T-cell (primary cell): ENCODE measurements at regions of chr13 and their contacts with region 1.

Region 1: DNA sequence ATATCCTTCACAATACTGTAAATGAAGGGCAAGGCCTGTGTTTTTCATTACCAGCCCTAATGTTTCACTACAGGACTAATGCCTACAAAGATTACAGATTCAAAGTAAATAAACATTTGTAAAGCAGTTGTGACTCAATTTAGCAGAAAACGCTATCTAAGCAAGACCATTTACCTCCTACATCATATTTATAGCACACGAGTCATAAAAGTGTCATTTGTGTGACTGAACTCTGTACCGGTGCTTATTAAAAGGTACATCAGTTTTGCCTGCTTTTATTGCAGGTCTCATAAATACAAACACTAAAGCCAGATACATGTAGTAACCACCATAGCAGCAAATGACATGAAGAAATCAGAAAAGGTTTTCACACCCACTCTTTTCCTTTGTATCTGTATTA is 61.5 kb upstream of the SLC15A1 start:
- DNase-seq: no peak
- ATAC-seq: no peak
- H3K4me3 ChIP-seq: no peak overlapping the region
- H3K4me3 Mint-ChIP-seq: no peak overlapping the region
- H3K27ac ChIP-seq: no peak overlapping the region
- H3K27ac Mint-ChIP-seq: no peak overlapping the region
- H3K4me1 ChIP-seq: no peaks in the 10 kb centered on the region
- H3K4me1 Mint-ChIP-seq: no peaks in the 10 kb centered on the region
- H3K27me3 ChIP-seq: no peaks in the 10 kb centered on the region
- H3K27me3 Mint-ChIP-seq: no peaks in the 10 kb centered on the region

Region 2: DNA sequence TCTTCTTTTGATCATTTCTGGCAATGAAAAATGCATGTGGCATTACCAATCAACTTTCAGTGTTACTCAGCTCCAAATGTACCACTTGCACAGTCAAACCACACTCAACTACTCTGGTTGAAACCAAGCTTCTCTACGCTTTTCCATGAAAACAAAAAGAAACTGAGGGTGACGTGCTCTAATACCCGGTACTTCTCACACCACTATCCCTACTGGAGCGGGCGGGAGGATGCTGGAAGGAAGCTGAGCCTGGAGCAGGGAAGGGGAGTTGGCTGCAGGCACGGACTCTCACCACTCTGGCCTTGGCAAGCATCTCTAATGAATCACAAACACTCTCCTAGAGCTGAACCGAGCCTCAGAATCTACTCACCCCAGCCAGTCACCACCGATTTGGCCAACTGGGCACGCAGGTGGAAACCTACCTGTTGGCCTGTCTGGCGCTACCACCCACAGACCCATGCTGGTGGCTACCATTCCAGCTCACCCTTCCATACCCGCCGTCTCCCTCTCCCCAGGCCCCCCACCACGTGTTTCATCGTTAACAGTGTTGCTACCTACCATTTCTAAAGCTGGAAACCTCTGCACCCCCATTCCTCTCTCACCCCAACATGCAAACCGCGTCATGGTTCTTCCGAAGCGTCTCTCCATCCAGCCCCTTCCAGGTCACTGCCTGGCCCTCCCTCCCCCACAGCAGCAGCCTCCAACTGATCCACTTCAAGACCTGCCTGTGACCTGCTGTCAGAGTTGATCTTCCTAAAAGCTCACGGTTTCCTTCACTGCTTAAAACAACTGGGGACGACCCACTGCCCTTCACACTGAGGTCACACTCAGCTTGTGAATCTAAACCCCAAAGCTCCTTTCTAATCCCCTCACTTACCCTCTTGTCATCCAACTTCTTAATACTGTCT is 285.1 kb before region 1 on chr13:
- CTCF ChIA-PET with region 1: no interaction called
- POLR2A ChIA-PET with region 1: interaction called in 1 of 2 experiments, 15 read pairs
- DNase-seq: no peak
- ATAC-seq: no peak
- H3K4me3 ChIP-seq: no peak overlapping the region
- H3K4me3 Mint-ChIP-seq: peak overlapping the region in 1 of 3 donors; percentile 12
- H3K27ac ChIP-seq: no peak overlapping the region
- H3K27ac Mint-ChIP-seq: peak overlapping the region; percentile 32 to 68
- H3K4me1 ChIP-seq: peaks cover 2 to 84% of the 10 kb centered on the region in 2 experiments
- H3K4me1 Mint-ChIP-seq: peaks cover 87 to 95% (median 91%) of the 10 kb centered on the region in 3 donors
- H3K27me3 ChIP-seq: no peaks in the 10 kb centered on the region
- H3K27me3 Mint-ChIP-seq: no peaks in the 10 kb centered on the region

Region 3: DNA sequence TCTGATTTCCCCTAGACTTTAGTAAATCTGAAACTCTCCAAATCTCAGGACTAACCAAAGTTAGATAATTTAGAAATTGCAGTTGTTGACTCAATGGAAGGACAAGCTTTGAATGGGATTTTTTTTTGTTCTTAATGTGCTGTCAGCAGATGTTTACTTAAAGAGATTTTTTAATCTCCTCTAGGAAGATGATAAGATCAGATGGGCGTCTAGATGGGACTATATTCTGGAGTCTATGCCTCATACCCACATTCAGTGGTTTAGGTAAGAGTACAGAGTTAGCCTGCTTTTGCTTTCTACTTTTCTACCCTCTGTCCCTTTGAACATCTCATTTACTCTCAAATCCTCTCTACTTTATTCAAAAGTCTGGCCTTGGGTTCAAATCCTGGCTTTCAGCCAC is 726.5 kb after region 1 on chr13:
- CTCF ChIA-PET with region 1: no interaction called
- POLR2A ChIA-PET with region 1: no interaction called
- DNase-seq: no peak
- ATAC-seq: no peak
- H3K4me3 ChIP-seq: no peak overlapping the region
- H3K4me3 Mint-ChIP-seq: peak overlapping the region in 2 of 3 donors; percentile 9 to 28
- H3K27ac ChIP-seq: peak overlapping the region; percentile 2
- H3K27ac Mint-ChIP-seq: peak overlapping the region; percentile 85 to 90
- H3K4me1 ChIP-seq: peaks cover 23 to 25% of the 10 kb centered on the region in 2 experiments
- H3K4me1 Mint-ChIP-seq: peaks cover 41 to 55% (median 45%) of the 10 kb centered on the region in 3 donors
- H3K27me3 ChIP-seq: no peaks in the 10 kb centered on the region
- H3K27me3 Mint-ChIP-seq: no peaks in the 10 kb centered on the region